ENCODE measurements at regions of chr3 and their contacts with region 1.

Region 1: DNA sequence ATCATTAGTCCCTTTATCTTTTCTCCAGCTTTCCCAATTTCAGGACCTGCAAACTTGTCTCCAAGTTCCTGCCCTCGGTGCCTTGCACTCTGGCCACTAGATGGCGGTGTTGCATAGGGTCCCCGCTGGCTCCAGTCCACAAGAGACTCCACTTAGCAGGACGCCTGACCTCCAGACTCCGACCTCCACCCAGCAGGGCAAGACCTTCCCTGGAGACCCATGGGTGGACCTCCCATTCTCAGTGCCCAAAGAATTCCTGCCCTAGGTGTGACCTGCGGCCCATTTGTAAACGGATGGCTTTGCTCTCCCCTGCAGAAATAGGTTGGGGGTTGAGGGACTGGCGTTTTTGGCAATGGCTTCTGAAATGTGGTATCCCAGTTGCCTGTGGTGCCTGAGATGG is 82.6 kb downstream of the LSM3 start:
- DNase-seq: peak; percentile 55 to 86 (median 72)
- ATAC-seq: peak; percentile 61
- H3K4me3 ChIP-seq: no peak overlapping the region
- H3K4me3 Mint-ChIP-seq: no peak overlapping the region
- H3K27ac ChIP-seq: no peak overlapping the region
- H3K27ac Mint-ChIP-seq: no peak overlapping the region
- H3K4me1 ChIP-seq: peaks cover 3% of the 10 kb centered on the region
- H3K4me1 Mint-ChIP-seq: no peaks in the 10 kb centered on the region
- H3K27me3 ChIP-seq: no peaks in the 10 kb centered on the region
- H3K27me3 Mint-ChIP-seq: no peaks in the 10 kb centered on the region
- CTCF ChIP-seq: peak; percentile 100

Region 2: GRCh38 chr3:14203521-14204079 is 57.6 kb before region 1 on chr3:
- CTCF ChIA-PET with region 1: no interaction called
- POLR2A ChIA-PET with region 1: no interaction called
- intact Hi-C with region 1: loop called in 1 of 2 experiments (anchors 2 kb)
- DNase-seq: peak in 13 of 14 experiments; percentile 10 to 74 (median 26)
- ATAC-seq: peak; percentile 64
- H3K4me3 ChIP-seq: no peak overlapping the region
- H3K4me3 Mint-ChIP-seq: no peak overlapping the region
- H3K27ac ChIP-seq: no peak overlapping the region
- H3K27ac Mint-ChIP-seq: no peak overlapping the region
- H3K4me1 ChIP-seq: peaks cover 3% of the 10 kb centered on the region
- H3K4me1 Mint-ChIP-seq: no peaks in the 10 kb centered on the region
- H3K27me3 ChIP-seq: no peaks in the 10 kb centered on the region
- H3K27me3 Mint-ChIP-seq: no peaks in the 10 kb centered on the region
- CTCF ChIP-seq: peak; percentile 77

Region 3: DNA sequence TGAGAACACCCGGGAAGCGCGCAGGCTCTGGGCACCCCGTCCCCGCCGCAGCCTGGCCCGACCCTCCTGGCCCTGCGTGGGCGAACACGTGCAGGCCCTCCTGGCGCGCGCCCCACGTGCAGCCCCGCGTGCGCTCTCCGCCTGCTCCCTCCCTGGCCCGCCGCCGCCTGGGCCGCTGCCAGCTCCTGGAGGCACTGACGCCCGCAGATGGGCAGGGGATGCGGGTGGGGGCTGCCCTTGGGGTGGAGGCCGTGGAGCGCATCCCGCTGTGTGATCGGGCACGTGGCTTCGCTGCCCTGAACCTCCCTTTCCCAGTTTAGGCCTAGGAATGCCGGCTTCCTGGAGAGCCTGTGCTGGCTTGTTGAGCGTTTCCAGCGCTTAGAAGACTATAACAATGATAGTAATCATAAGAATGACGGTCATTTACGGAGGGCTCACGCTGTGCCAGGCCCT is 36.6 kb after region 1 on chr3:
- CTCF ChIA-PET with region 1: no interaction called
- POLR2A ChIA-PET with region 1: no interaction called
- intact Hi-C with region 1: no loop called
- DNase-seq: no peak
- ATAC-seq: no peak
- H3K4me3 ChIP-seq: no peak overlapping the region
- H3K4me3 Mint-ChIP-seq: no peak overlapping the region
- H3K27ac ChIP-seq: no peak overlapping the region
- H3K27ac Mint-ChIP-seq: no peak overlapping the region
- H3K4me1 ChIP-seq: peaks cover 8% of the 10 kb centered on the region
- H3K4me1 Mint-ChIP-seq: no peaks in the 10 kb centered on the region
- H3K27me3 ChIP-seq: peaks cover 0 to 6% of the 10 kb centered on the region in 2 experiments
- H3K27me3 Mint-ChIP-seq: peaks cover 26% of the 10 kb centered on the region
- CTCF ChIP-seq: no peak

Region 4: GRCh38 chr3:14467814-14468620 is 206.8 kb after region 1 on chr3:
- CTCF ChIA-PET with region 1: interaction called, 3 read pairs
- POLR2A ChIA-PET with region 1: no interaction called
- intact Hi-C with region 1: loop called (anchors 1 kb)
- DNase-seq: peak; percentile 24 to 72 (median 40)
- ATAC-seq: peak; percentile 79
- H3K4me3 ChIP-seq: no peak overlapping the region
- H3K4me3 Mint-ChIP-seq: no peak overlapping the region
- H3K27ac ChIP-seq: no peak overlapping the region
- H3K27ac Mint-ChIP-seq: no peak overlapping the region
- H3K4me1 ChIP-seq: no peaks in the 10 kb centered on the region
- H3K4me1 Mint-ChIP-seq: no peaks in the 10 kb centered on the region
- H3K27me3 ChIP-seq: no peaks in the 10 kb centered on the region
- H3K27me3 Mint-ChIP-seq: no peaks in the 10 kb centered on the region
- CTCF ChIP-seq: peak; percentile 89

Region 5: GRCh38 chr3:14548321-14548729 is 287.1 kb after region 1 on chr3:
- CTCF ChIA-PET with region 1: no interaction called
- POLR2A ChIA-PET with region 1: no interaction called
- intact Hi-C with region 1: loop called (anchors 1 kb)
- DNase-seq: peak in 9 of 14 experiments; percentile 6 to 59 (median 31)
- ATAC-seq: peak; percentile 41
- H3K4me3 ChIP-seq: no peak overlapping the region
- H3K4me3 Mint-ChIP-seq: no peak overlapping the region
- H3K27ac ChIP-seq: no peak overlapping the region
- H3K27ac Mint-ChIP-seq: no peak overlapping the region
- H3K4me1 ChIP-seq: no peaks in the 10 kb centered on the region
- H3K4me1 Mint-ChIP-seq: no peaks in the 10 kb centered on the region
- H3K27me3 ChIP-seq: peaks cover 2 to 6% of the 10 kb centered on the region in 2 experiments
- H3K27me3 Mint-ChIP-seq: peaks cover 54% of the 10 kb centered on the region
- CTCF ChIP-seq: peak; percentile 56

Region 6: DNA sequence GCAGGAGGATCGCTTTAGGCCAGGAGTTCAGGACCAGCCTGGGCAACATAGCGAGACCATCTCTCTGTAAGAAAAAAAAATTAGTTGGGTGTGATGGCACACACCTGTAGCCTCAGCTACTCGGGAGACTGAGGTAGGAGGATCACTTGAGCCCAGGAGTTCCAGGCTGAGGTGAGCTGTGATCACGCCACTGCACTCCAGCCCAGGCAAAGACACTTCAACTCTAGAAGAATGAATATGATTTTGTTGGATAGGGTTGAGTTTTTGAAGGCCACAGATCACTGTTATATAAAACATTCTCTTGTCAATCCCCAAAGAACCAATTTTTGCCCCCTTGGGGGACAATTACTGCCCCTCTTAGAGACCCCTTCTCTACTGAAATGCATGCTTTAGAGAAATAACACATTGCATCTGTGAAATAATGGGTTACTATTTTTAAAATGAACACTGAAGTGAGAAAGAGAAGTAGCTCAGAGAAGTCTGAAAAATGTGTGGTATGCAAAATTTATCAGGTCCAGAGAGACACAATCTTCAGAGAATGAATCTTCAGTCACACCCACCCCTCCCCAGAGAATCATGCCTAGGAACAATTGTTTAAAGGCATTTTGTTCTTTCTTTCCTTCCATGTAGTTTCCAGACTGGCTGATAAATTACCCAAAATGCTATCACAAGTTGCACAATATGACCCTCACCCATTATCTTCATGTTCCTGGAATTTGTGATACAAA is 1123.4 kb after region 1 on chr3:
- CTCF ChIA-PET with region 1: no interaction called
- POLR2A ChIA-PET with region 1: no interaction called
- intact Hi-C with region 1: no loop called
- DNase-seq: no peak
- ATAC-seq: no peak
- H3K4me3 ChIP-seq: no peak overlapping the region
- H3K4me3 Mint-ChIP-seq: no peak overlapping the region
- H3K27ac ChIP-seq: no peak overlapping the region
- H3K27ac Mint-ChIP-seq: no peak overlapping the region
- H3K4me1 ChIP-seq: no peaks in the 10 kb centered on the region
- H3K4me1 Mint-ChIP-seq: no peaks in the 10 kb centered on the region
- H3K27me3 ChIP-seq: no peaks in the 10 kb centered on the region
- H3K27me3 Mint-ChIP-seq: no peaks in the 10 kb centered on the region
- CTCF ChIP-seq: no peak

Measured in CD4-positive, alpha-beta T cell (primary cell).